AG04450 (cell line): ENCODE measurements at regions of chr12 and their contacts with region 1.

Region 1: GRCh38 chr12:118372541-118373495 is at the start of gene TAOK3:
- DNase-seq: peak; percentile 96
- H3K4me3 ChIP-seq: peak within 1 kb of the TSS; percentile 92
- H3K27ac ChIP-seq: peak within 1 kb of the TSS; percentile 57
- H3K27me3 ChIP-seq: no peaks in the 10 kb centered on the region
- CTCF ChIP-seq: no peak
- polyA plus RNA-seq, gene TAOK3: 48.8 and 56.4 TPM in 2 replicates

Region 2: DNA sequence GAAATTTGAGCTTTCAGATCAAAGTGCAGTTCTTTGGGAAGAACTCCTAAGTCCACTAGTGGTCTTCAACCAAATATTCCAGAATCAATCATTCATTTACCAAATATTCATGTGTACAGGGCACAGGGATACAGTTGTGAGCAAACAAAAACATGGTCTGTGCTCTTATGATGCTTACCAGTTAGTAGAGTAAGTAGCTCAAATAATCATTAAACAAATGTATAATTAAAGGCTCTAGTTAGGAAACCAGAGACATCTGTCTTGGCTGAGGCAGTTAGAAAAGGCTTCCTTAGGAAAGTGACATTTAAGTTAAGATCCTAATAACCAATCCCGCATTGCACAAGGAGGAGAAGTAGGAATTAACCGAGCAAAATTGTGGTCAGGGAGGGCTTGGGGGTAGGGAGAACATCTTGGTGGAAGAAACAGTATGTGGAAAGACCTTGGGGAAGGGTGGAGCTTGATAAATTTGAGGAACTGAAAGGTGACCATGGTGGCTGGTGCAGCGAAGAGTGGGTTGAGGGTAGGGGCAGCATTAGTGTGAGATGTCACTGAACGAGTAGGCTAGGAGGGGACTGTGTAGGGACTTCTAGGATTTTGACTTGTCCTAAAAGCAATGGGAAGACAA is 196.9 kb before region 1 on chr12:
- CTCF ChIA-PET with region 1: interaction called, 333 read pairs
- POLR2A ChIA-PET with region 1: interaction called, 3 read pairs
- DNase-seq: no peak
- H3K4me3 ChIP-seq: no peak overlapping the region
- H3K27ac ChIP-seq: no peak overlapping the region
- H3K27me3 ChIP-seq: no peaks in the 10 kb centered on the region
- CTCF ChIP-seq: no peak

Region 3: GRCh38 chr12:118212606-118213005 is 160.2 kb before region 1 on chr12:
- CTCF ChIA-PET with region 1: interaction called, 20 read pairs
- POLR2A ChIA-PET with region 1: no interaction called
- DNase-seq: no peak
- H3K4me3 ChIP-seq: no peak overlapping the region
- H3K27ac ChIP-seq: no peak overlapping the region
- H3K27me3 ChIP-seq: no peaks in the 10 kb centered on the region
- CTCF ChIP-seq: no peak

Region 4: DNA sequence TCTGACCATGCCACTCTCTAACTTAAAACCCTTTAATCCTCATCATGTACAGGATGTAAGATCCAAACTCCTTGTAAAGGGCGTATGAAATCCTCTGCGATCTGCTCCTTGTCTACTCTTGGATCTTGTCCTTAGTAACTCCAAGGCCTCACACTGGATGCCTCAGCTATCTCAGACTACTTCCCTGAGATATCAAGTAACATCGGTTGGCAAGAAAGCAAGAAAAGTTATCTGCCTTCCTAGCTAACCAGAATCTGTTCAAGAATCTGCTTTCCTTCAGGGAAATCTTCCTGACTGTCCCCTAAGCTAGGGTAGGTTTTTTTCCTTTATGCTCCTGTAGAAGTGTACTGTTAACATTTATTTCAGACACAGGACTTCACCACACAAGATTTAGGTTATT is 82.7 kb before region 1 on chr12:
- CTCF ChIA-PET with region 1: interaction called, 9 read pairs
- POLR2A ChIA-PET with region 1: interaction called, 10 read pairs
- DNase-seq: peak; percentile 36
- H3K4me3 ChIP-seq: no peak overlapping the region
- H3K27ac ChIP-seq: peak overlapping the region; percentile 25
- H3K27me3 ChIP-seq: no peaks in the 10 kb centered on the region
- CTCF ChIP-seq: no peak

Region 5: DNA sequence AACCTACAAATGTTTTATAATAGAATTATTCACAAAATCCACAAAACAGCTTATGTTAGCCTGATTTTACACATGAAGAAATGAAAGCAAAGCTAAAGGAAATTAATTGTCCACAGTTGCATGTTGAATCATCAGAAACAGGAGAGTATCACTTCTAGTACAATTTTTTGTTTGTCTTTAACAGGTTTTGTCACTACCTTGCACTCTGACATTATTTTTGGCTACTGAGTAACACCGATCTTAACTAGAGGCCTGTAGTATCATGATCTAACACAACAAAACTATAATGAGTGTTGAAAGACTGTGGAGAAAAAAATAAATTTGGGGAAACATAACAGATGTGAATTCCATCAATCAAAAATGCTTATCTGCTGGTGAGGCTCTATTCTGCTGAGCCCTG is 60.2 kb before region 1 on chr12:
- CTCF ChIA-PET with region 1: interaction called, 14 read pairs
- POLR2A ChIA-PET with region 1: interaction called, 9 read pairs
- DNase-seq: no peak
- H3K4me3 ChIP-seq: no peak overlapping the region
- H3K27ac ChIP-seq: no peak overlapping the region
- H3K27me3 ChIP-seq: no peaks in the 10 kb centered on the region
- CTCF ChIP-seq: no peak

Region 6: GRCh38 chr12:118357257-118358007 is 15.4 kb before region 1 on chr12:
- CTCF ChIA-PET with region 1: interaction called, 59 read pairs
- POLR2A ChIA-PET with region 1: interaction called, 5 read pairs
- DNase-seq: no peak
- H3K4me3 ChIP-seq: no peak overlapping the region
- H3K27ac ChIP-seq: peak overlapping the region; percentile 72
- H3K27me3 ChIP-seq: no peaks in the 10 kb centered on the region
- CTCF ChIP-seq: no peak